Left ventricle myocardium superior (tissue), 1 donor: ENCODE measurements at regions of chr12 and their contacts with region 1.

Region 1: DNA sequence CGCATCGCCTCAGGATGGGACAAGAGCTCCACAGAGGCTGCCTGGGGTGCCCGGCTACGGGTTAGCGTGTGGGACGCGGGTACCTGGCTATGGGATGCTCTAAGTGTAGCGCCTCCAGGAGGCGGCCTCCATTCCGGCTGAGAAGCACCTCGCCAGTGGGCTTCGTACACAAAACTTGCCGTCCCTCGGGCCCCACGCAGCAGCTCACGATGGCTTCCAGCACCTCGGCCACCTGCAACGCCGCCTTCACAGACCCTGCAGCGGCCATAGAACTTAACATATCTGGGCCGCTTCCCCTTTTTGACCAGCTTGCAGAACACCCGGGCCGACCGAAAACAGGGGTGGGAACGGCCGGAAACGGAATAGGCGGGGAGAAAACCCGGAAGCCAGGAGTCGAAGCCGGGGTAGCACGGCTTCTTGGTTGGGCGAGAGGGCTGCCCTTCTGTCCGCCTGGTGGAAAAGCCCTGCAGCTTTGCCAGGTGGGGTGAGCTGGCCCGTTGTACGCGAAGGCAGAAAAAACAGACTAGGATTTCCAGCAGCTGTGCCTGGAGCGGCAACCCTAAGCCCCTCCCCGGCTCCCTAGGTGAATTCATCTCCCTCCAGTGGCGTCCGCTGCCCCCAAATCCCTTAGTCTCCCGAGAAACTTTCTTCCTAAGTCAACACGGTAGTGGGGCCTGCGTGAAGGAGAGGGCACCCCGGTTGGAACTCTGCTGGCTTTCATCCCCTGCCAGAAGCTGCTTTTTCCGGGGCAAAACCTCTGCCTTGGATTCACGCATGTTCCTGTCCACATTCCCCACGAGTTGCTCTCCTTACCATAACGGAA is at the start of gene BBS10:
- DNase-seq: peak; percentile 93
- ATAC-seq: peak; percentile 99
- total RNA-seq, gene BBS10: 8.3 TPM

Region 2: DNA sequence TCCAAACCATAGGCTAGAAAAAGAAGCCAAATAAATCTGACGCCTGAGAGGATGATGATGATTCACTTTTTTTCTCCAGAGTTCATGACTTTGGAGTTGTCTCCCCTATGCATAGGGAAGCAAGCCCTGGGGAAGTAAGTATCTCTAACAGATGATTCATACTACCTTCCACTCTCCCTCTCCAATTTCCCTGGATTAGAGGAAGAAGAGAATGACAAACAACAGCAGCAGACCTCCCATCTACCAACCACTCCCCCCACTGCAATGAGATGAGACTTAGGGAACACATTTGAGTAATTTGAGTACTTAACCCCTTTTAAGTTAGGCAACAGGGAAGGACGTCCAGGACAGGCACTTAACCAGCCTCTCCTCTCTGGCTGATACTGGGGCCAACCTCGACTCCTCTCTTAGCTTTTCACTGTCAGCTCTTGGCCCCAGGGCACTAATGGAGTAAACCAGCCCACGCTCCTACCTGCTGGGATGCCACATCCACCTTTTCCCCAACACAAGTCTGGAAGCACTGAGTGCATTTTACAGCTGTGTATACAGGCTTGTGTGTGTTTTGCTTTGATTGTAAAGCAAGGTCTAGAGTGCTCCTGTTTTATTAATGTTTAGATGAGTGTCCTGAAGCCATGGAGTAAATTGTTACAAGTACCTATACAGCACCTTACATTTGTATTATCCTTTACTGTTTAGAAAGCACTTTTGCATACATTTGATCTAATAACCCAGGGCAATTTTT is 497.4 kb before region 1 on chr12:
- intact Hi-C with region 1: no loop called
- DNase-seq: no peak
- ATAC-seq: no peak

Region 3: DNA sequence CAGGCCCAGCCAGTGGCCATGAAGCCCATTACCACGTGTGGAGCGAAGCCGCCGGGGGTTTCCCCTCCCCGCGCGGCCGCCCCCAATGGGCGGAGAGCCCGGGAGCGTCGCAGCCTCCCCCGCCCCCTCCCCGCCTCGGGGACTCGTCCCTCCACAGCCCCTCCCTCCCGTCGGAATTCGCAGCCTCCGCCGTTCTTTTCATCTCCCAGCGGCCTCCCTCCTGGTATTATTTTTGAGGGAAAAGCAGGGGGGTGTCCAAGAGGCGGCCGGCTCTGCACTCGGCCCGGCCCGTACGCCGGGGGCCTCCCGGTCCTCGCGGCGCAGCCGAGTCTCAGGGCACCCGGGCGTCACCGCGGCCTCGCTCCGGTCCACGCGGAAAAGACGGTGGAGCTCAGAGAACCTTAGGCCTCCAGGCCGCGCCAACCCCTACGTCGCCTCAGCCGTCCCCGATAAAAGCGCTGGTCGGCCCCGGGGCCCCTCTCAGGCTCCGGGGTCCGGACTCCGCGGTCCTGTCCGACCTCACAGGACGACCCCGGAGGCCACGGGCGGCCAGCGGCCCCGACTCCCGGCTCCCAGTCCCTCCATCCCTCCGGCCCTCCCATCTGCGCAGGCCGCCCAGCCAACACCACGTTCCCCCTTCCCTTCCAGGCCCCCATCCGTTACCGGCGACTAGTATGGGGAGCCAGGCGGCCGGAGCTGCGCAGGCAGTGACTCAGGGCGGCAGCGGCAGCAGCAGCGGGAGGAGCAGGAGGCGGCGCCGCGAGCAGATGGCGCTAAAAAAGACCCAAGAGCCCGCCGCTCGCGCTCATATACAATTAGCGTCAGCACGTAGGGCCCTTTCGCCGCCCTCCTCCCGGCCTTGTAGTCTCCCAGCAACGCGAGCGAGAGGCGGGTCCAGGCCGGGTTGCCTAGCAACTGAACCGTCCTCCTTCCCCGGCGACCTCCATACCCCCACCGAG is 264.1 kb before region 1 on chr12 and contains the start of gene NAP1L1:
- intact Hi-C with region 1: loop called (anchors 10 kb)
- DNase-seq: peak; percentile 99
- ATAC-seq: peak; percentile 97
- total RNA-seq, gene NAP1L1: 316 TPM

Region 4: GRCh38 chr12:76123451-76124212 is 224.7 kb before region 1 on chr12:
- intact Hi-C with region 1: no loop called
- DNase-seq: no peak
- ATAC-seq: no peak

Region 5: GRCh38 chr12:76137606-76138005 is 210.7 kb before region 1 on chr12:
- intact Hi-C with region 1: no loop called
- DNase-seq: no peak
- ATAC-seq: no peak

Region 6: DNA sequence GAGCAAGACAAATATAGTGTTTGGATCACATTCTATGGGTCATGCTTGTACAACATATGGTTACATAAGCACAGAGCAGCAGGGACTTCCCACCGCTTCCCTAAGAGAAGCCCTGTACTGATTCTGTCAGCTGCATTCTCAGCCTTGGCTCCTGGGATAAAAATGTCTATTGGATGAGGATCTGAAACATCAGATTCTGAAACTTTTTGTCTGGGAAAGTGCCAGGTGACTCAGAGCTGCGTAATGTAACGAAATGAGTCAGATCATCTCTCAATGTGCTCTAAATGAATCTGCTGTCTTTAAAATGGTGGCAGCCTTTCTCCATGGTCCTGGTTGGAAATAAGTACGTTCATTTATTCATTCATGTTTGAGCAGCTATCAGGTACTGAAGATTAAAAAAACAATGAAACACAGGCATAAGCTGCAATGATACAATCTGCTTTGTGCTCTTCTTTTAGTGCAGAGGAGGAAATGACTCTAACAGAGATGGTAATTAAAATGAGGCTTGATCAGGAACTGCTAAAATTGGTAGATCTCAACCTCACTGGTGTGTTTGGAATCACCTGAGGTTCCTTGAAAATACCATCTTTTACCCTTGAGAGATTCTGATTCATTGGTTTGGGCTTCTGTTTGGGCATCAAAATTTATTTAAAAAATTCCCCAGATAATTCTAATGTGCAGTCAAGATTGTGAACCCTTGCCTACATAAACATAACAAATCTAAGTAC is 164.7 kb before region 1 on chr12:
- intact Hi-C with region 1: no loop called
- DNase-seq: no peak
- ATAC-seq: no peak

Region 7: GRCh38 chr12:76559400-76560085 is 211.3 kb after region 1 on chr12 and contains the start of gene OSBPL8:
- intact Hi-C with region 1: loop called (anchors 10 kb)
- DNase-seq: peak; percentile 98
- ATAC-seq: peak; percentile 97
- total RNA-seq, gene OSBPL8: 28.3 TPM